CD4-positive, alpha-beta memory T cell (primary cell): ENCODE measurements at regions of chr12 and their contacts with region 1.

Region 1: GRCh38 chr12:121296618-121297434 is at the start of gene CAMKK2:
- DNase-seq: peak; percentile 87 to 94 (median 91)
- H3K4me3 ChIP-seq: peak within 1 kb of the TSS; percentile 53 to 82
- H3K4me3 Mint-ChIP-seq: peak within 1 kb of the TSS; percentile 87 to 94 (median 90)
- H3K27ac ChIP-seq: peak within 1 kb of the TSS; percentile 66
- H3K27ac Mint-ChIP-seq: peak within 1 kb of the TSS in 6 of 7 donors; percentile 78 to 93 (median 88)
- H3K4me1 ChIP-seq: peaks cover 26% of the 10 kb centered on the region
- H3K4me1 Mint-ChIP-seq: peaks cover 8 to 23% (median 18%) of the 10 kb centered on the region in 4 donors
- H3K27me3 ChIP-seq: no peaks in the 10 kb centered on the region
- H3K27me3 Mint-ChIP-seq: no peaks in the 10 kb centered on the region
- total RNA-seq, gene CAMKK2: 17.0 to 20.0 TPM

Region 2: GRCh38 chr12:120820885-120821510 is 475.8 kb before region 1 on chr12:
- CTCF ChIA-PET with region 1: no interaction called
- POLR2A ChIA-PET with region 1: no interaction called
- intact Hi-C with region 1: no loop called
- DNase-seq: peak; percentile 7 to 38 (median 14)
- H3K4me3 ChIP-seq: no peak overlapping the region
- H3K4me3 Mint-ChIP-seq: peak overlapping the region in 7 of 8 donors; percentile 42 to 68 (median 55)
- H3K27ac ChIP-seq: no peak overlapping the region
- H3K27ac Mint-ChIP-seq: peak overlapping the region in 4 of 7 donors; percentile 22 to 80 (median 56)
- H3K4me1 ChIP-seq: peaks cover 12% of the 10 kb centered on the region
- H3K4me1 Mint-ChIP-seq: peaks cover 37 to 56% (median 46%) of the 10 kb centered on the region in 4 donors
- H3K27me3 ChIP-seq: no peaks in the 10 kb centered on the region
- H3K27me3 Mint-ChIP-seq: no peaks in the 10 kb centered on the region

Region 3: GRCh38 chr12:121128970-121129810 is 167.6 kb before region 1 on chr12:
- CTCF ChIA-PET with region 1: no interaction called
- POLR2A ChIA-PET with region 1: no interaction called
- intact Hi-C with region 1: loop called (anchors 1 kb)
- DNase-seq: peak; percentile 79 to 88 (median 84)
- H3K4me3 ChIP-seq: peak overlapping the region; percentile 31 to 36
- H3K4me3 Mint-ChIP-seq: peak overlapping the region; percentile 79 to 91 (median 86)
- H3K27ac ChIP-seq: peak overlapping the region; percentile 53
- H3K27ac Mint-ChIP-seq: peak overlapping the region; percentile 88 to 97 (median 93)
- H3K4me1 ChIP-seq: peaks cover 70% of the 10 kb centered on the region
- H3K4me1 Mint-ChIP-seq: peaks cover 57 to 93% (median 68%) of the 10 kb centered on the region in 4 donors
- H3K27me3 ChIP-seq: no peaks in the 10 kb centered on the region
- H3K27me3 Mint-ChIP-seq: no peaks in the 10 kb centered on the region

Region 4: GRCh38 chr12:121209624-121210572 is 86.9 kb before region 1 on chr12 and contains the start of gene P2RX4:
- CTCF ChIA-PET with region 1: no interaction called
- POLR2A ChIA-PET with region 1: interaction called, 4 read pairs
- intact Hi-C with region 1: loop called (anchors 1 kb)
- DNase-seq: peak; percentile 88 to 92 (median 90)
- H3K4me3 ChIP-seq: peak within 1 kb of the TSS; percentile 54 to 85
- H3K4me3 Mint-ChIP-seq: peak within 1 kb of the TSS; percentile 88 to 99 (median 93)
- H3K27ac ChIP-seq: peak within 1 kb of the TSS; percentile 91
- H3K27ac Mint-ChIP-seq: peak within 1 kb of the TSS; percentile 91 to 100 (median 98)
- H3K4me1 ChIP-seq: peaks cover 44% of the 10 kb centered on the region
- H3K4me1 Mint-ChIP-seq: peaks cover 16 to 45% (median 32%) of the 10 kb centered on the region in 4 donors
- H3K27me3 ChIP-seq: no peaks in the 10 kb centered on the region
- H3K27me3 Mint-ChIP-seq: no peaks in the 10 kb centered on the region
- total RNA-seq, gene P2RX4: 48.3 to 57.1 TPM

Region 5: GRCh38 chr12:121240484-121241101 is 56.2 kb before region 1 on chr12:
- CTCF ChIA-PET with region 1: interaction called, 3 read pairs
- POLR2A ChIA-PET with region 1: interaction called, 28 read pairs
- intact Hi-C with region 1: loop called (anchors 1 kb)
- DNase-seq: peak; percentile 94 to 98 (median 95)
- H3K4me3 ChIP-seq: peak overlapping the region; percentile 47 to 54
- H3K4me3 Mint-ChIP-seq: peak overlapping the region; percentile 82 to 92 (median 90)
- H3K27ac ChIP-seq: peak overlapping the region; percentile 76
- H3K27ac Mint-ChIP-seq: peak overlapping the region; percentile 95 to 100 (median 99)
- H3K4me1 ChIP-seq: peaks cover 38% of the 10 kb centered on the region
- H3K4me1 Mint-ChIP-seq: peaks cover 26 to 55% (median 38%) of the 10 kb centered on the region in 4 donors
- H3K27me3 ChIP-seq: no peaks in the 10 kb centered on the region
- H3K27me3 Mint-ChIP-seq: no peaks in the 10 kb centered on the region

Region 6: GRCh38 chr12:121318121-121318520 is 21.3 kb after region 1 on chr12:
- CTCF ChIA-PET with region 1: no interaction called
- POLR2A ChIA-PET with region 1: no interaction called
- intact Hi-C with region 1: no loop called
- DNase-seq: no peak
- H3K4me3 ChIP-seq: no peak overlapping the region
- H3K4me3 Mint-ChIP-seq: no peak overlapping the region
- H3K27ac ChIP-seq: no peak overlapping the region
- H3K27ac Mint-ChIP-seq: peak overlapping the region in 1 of 7 donors; percentile 35
- H3K4me1 ChIP-seq: peaks cover 8% of the 10 kb centered on the region
- H3K4me1 Mint-ChIP-seq: peaks cover 12 to 17% (median 15%) of the 10 kb centered on the region in 4 donors
- H3K27me3 ChIP-seq: no peaks in the 10 kb centered on the region
- H3K27me3 Mint-ChIP-seq: no peaks in the 10 kb centered on the region

Region 7: DNA sequence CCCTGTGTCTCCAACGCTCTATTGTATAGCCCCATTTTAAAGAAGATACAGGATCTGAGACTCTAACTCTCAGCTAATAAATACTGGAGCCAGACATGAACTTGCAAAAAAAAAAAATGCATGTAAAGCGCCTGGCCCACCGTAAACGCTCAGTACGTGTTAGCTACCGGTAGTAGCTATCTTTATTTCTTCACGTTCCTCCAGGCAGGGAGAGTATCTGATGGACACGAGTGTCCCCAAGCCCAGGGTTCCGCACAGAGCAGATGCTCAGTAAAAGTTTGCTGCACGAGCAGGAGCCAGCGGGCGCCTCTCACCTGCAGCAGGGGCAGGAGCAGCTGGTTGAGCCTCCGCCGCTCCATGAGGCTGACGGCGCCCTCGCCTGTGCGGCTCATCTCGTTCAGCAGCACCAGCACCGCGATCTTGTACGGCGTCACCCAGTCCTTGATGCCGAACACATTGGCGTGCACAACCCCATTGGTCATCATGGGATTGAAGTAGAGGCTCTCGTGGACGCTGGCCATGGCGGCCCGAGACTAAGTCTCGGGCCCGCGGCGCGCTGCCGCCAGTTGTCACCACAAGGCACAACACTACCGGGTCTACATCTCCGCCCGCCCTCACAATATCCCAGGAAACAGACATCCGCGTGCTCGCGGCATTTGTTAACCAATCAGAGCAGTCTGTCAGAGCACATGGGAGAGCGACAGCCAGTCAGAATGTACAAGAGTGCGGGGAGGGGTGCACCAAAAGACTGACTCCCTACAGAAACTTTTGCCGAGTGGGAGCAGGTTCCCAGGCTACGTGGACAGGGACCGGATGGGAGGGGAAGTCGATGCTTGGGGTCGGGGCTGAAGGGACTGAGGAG is 55.2 kb after region 1 on chr12 and contains the start of gene ANAPC5:
- CTCF ChIA-PET with region 1: no interaction called
- POLR2A ChIA-PET with region 1: interaction called, 6 read pairs
- intact Hi-C with region 1: loop called (anchors 1 kb)
- DNase-seq: peak; percentile 90 to 95 (median 92)
- H3K4me3 ChIP-seq: peak within 1 kb of the TSS; percentile 94 to 98
- H3K4me3 Mint-ChIP-seq: peak within 1 kb of the TSS; percentile 91 to 100 (median 98)
- H3K27ac ChIP-seq: peak within 1 kb of the TSS; percentile 65
- H3K27ac Mint-ChIP-seq: peak within 1 kb of the TSS; percentile 87 to 99 (median 98)
- H3K4me1 ChIP-seq: peaks cover 20% of the 10 kb centered on the region
- H3K4me1 Mint-ChIP-seq: peaks cover 11 to 51% (median 22%) of the 10 kb centered on the region in 4 donors
- H3K27me3 ChIP-seq: no peaks in the 10 kb centered on the region
- H3K27me3 Mint-ChIP-seq: peaks cover 0 to 2% of the 10 kb centered on the region in 2 donors
- total RNA-seq, gene ANAPC5: 143 to 144 TPM